MCF 10A (cell line): ENCODE measurements at regions of chr6 and their contacts with region 1.

Region 1: GRCh38 chr6:10722820-10723566 is at the start of gene TMEM14C:
- DNase-seq: peak; percentile 98
- H3K4me3 Mint-ChIP-seq: peak within 1 kb of the TSS; percentile 96
- H3K27ac Mint-ChIP-seq: peak within 1 kb of the TSS; percentile 97
- H3K4me1 Mint-ChIP-seq: peaks cover 27% of the 10 kb centered on the region
- H3K27me3 Mint-ChIP-seq: no peaks in the 10 kb centered on the region
- CTCF ChIP-seq: no peak
- total RNA-seq, gene TMEM14C: 159 and 160 TPM in 2 replicates

Region 2: DNA sequence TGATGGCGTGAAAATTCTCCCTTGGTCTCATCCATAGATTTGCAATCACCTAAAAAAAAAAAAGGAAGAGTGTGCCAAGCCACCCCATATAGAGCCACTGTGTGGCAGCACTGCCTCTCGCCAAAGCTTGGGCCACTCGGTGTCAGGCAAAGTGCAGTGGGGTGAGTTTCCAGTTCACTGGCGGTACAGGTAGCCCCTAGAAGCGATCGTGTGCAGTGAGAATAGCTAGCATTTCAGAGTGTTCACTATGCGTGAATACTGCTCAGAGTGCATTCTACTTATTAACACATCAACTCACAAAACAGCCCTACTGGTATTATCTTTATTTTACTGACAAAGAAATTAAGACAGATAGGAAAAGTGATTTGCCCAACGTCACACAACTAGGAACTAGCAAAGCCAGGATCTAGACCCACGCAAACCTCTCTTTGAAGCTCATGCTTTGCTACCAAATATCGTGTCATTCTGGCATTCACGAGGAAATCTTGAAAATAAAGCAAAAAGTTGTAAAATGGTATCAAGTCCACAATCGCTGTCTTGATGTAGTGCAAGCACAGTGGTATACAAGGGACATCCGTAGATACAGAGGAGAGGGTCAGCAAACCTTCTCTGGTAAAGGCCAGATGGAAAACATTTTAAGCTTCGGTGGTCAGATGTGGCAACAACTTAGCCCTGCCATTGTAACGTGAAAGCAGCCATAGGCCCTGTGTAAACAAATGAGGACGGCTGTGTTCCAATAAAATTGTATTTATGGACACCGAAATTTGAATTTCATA is 212.2 kb before region 1 on chr6:
- CTCF ChIA-PET with region 1: interaction called, 16 read pairs
- POLR2A ChIA-PET with region 1: interaction called, 7 read pairs
- intact Hi-C with region 1: no loop called
- DNase-seq: peak; percentile 67
- H3K4me3 Mint-ChIP-seq: no peak overlapping the region
- H3K27ac Mint-ChIP-seq: no peak overlapping the region
- H3K4me1 Mint-ChIP-seq: peaks cover 6% of the 10 kb centered on the region
- H3K27me3 Mint-ChIP-seq: no peaks in the 10 kb centered on the region
- CTCF ChIP-seq: peak; percentile 71

Region 3: DNA sequence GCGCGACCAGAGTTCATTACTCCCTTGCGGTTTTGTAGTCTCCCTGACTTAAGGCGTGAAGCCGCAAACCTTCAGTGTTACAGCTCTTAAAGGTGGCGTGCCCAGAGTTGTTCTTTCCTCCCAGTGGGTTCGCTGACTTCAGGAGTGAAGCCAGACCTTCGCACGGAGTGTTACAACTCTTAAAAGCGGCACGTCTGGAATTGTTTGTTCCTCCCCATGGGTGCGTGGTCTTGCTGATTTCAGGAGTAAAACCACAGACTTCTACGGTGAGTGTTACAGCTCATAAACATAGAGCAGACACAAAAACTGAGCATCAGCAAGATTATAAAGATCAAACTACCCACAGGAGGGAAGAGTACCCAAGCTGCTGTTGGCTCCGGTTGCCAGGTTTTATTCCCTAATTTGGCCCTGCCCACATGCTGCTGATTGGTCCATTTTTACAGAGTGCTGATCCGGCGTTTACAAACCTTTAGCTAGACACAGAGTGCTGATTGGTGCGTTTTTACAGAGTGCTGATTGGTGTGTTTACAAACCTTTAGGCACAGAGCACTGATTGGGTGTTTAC is 10.2 kb after region 1 on chr6:
- CTCF ChIA-PET with region 1: interaction called, 7 read pairs
- POLR2A ChIA-PET with region 1: interaction called, 23 read pairs
- intact Hi-C with region 1: no loop called
- DNase-seq: no peak
- H3K4me3 Mint-ChIP-seq: no peak overlapping the region
- H3K27ac Mint-ChIP-seq: peak overlapping the region; percentile 88
- H3K4me1 Mint-ChIP-seq: peaks cover 7% of the 10 kb centered on the region
- H3K27me3 Mint-ChIP-seq: no peaks in the 10 kb centered on the region
- CTCF ChIP-seq: no peak

Region 4: GRCh38 chr6:10747251-10747972 is 24.4 kb after region 1 on chr6 and contains the start of gene TMEM14B:
- CTCF ChIA-PET with region 1: interaction called, 17 read pairs
- POLR2A ChIA-PET with region 1: interaction called, 185 read pairs
- intact Hi-C with region 1: loop called (anchors 1 kb)
- DNase-seq: peak; percentile 97
- H3K4me3 Mint-ChIP-seq: peak within 1 kb of the TSS; percentile 95
- H3K27ac Mint-ChIP-seq: peak within 1 kb of the TSS; percentile 95
- H3K4me1 Mint-ChIP-seq: peaks cover 18% of the 10 kb centered on the region
- H3K27me3 Mint-ChIP-seq: no peaks in the 10 kb centered on the region
- CTCF ChIP-seq: no peak
- total RNA-seq, gene TMEM14B: 122 and 143 TPM in 2 replicates

Region 5: GRCh38 chr6:10800829-10801535 is 78.0 kb after region 1 on chr6:
- CTCF ChIA-PET with region 1: interaction called, 3 read pairs
- POLR2A ChIA-PET with region 1: interaction called, 3 read pairs
- intact Hi-C with region 1: loop called (anchors 5 kb)
- DNase-seq: peak; percentile 76
- H3K4me3 Mint-ChIP-seq: no peak overlapping the region
- H3K27ac Mint-ChIP-seq: peak overlapping the region; percentile 57
- H3K4me1 Mint-ChIP-seq: peaks cover 8% of the 10 kb centered on the region
- H3K27me3 Mint-ChIP-seq: no peaks in the 10 kb centered on the region
- CTCF ChIP-seq: peak; percentile 96